ENCODE measurements at regions of chr3 and their contacts with region 1.

Region 1: GRCh38 chr3:184965639-184966430 is 153.9 kb downstream of the VPS8 start:
- DNase-seq: no peak
- H3K4me3 Mint-ChIP-seq: no peak overlapping the region
- H3K27ac Mint-ChIP-seq: no peak overlapping the region
- H3K4me1 Mint-ChIP-seq: no peaks in the 10 kb centered on the region
- H3K27me3 Mint-ChIP-seq: no peaks in the 10 kb centered on the region
- CTCF ChIP-seq: no peak

Region 2: DNA sequence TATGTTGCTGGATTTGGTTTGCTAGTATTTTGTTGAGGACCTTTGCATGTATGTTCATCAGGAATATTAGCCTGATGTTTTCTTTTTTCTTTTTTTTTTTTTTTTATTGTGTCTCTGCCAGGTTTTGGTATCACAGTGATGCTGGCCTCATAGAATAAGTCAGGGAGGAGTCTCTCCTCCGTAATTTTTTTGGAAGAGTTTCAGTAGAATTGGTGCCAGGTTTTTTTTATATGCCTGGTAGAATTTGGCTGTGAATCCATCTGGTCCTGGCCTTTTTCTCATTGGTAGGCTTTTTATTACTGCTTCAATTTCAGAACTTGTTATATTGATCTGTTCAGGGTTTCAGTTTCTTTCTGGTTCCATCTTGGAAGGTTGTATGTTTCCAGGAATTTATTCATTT is 12.0 kb after region 1 on chr3:
- CTCF ChIA-PET with region 1: no interaction called
- intact Hi-C with region 1: loop called (anchors 1 kb)
- DNase-seq: no peak
- H3K4me3 Mint-ChIP-seq: no peak overlapping the region
- H3K27ac Mint-ChIP-seq: no peak overlapping the region
- H3K4me1 Mint-ChIP-seq: no peaks in the 10 kb centered on the region
- H3K27me3 Mint-ChIP-seq: no peaks in the 10 kb centered on the region
- CTCF ChIP-seq: no peak

Region 3: GRCh38 chr3:185176750-185177359 is 211.0 kb after region 1 on chr3:
- CTCF ChIA-PET with region 1: no interaction called
- intact Hi-C with region 1: loop called (anchors 10 kb)
- DNase-seq: peak; percentile 66
- H3K4me3 Mint-ChIP-seq: no peak overlapping the region
- H3K27ac Mint-ChIP-seq: no peak overlapping the region
- H3K4me1 Mint-ChIP-seq: peaks cover 16% of the 10 kb centered on the region
- H3K27me3 Mint-ChIP-seq: no peaks in the 10 kb centered on the region
- CTCF ChIP-seq: peak; percentile 89

Measured in Calu3 (cell line).